Activated T-helper 1 cell treated with anti-CD3 and anti-CD28 coated beads, Interleukin-12 subunit alpha, Interleukin-12 subunit beta, Interleukin-2, Interleukin-4 antibody, amounts not matched to agents 30 ng/mL and 10 ng/mL and 1 ng/mL, durations not matched to agents 14 hours and 24 hours and 36 hours (primary cell): ENCODE measurements at regions of chr10 and their contacts with region 1.

Region 1: GRCh38 chr10:13659897-13660550 is 73.3 kb downstream of the PRPF18 start:
- DNase-seq: peak; percentile 34
- H3K4me3 Mint-ChIP-seq: no peak overlapping the region
- H3K27ac Mint-ChIP-seq: no peak overlapping the region
- H3K4me1 Mint-ChIP-seq: peaks cover 7% of the 10 kb centered on the region
- H3K27me3 Mint-ChIP-seq: peaks cover 2% of the 10 kb centered on the region

Region 2: DNA sequence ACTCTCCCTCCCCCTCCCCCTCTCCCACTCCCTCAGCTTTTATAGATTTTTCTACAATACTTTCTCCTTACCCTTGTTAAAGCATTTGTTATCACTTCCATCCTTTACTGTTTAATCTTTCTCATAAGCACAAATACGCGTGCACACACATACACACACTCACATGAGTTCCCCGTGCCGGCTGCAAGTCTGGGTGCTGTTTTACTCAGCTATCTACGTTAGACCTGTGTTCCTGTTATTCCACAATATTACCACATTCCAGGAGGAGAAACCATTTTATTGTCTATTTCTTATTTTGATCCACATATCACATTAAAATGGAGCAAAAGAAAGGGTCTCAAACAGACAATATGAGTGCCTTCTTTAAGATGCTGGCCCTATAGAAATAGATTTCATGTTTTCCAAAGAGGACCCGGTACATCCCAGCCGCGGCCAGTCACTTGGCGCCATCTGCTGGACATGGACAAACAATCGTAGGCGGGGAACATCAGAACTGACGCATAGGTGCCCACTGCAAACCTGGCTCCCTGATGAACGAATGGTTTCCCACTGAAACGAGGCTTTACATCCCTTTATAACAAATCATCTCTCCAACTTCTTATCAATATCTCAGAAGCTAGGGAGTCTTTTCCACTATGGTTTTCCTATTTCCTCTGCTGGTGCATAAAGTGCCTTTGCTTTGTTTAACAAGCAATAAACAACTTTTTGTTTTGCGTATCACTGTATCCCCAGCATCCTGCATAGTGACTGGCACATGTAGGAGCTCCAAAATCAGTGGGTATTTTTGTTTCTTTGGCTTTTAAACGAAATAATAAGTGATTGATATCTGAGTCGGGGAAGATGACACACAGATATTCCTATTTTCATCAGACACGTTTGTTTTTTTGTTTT is 585.2 kb before region 1 on chr10:
- intact Hi-C with region 1: no loop called
- DNase-seq: peak; percentile 29
- H3K4me3 Mint-ChIP-seq: no peak overlapping the region
- H3K27ac Mint-ChIP-seq: no peak overlapping the region
- H3K4me1 Mint-ChIP-seq: peaks cover 8% of the 10 kb centered on the region
- H3K27me3 Mint-ChIP-seq: peaks cover 24% of the 10 kb centered on the region

Region 3: DNA sequence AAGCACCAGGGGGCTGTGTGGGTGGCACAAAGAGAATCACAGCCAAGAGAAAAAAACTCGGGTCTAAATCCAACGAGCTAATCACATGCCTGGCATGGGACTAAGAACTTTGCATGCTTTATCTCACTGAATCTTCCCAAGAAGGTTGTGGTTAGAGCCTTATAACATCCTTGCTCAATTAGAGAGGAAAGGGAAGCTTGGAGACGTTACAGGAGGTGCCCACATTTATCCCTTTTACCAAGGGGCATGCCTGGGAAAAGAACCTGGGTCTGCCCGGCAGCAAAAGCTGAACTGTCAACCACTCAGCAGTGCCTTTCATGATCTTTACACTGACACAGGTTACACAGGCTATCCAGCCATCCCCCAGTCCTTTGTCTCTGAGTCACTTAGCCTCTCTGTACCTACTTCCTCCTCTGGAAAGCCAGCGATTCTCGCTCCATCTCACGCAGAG is 116.9 kb after region 1 on chr10:
- intact Hi-C with region 1: loop called (anchors 1 kb)
- DNase-seq: no peak
- H3K4me3 Mint-ChIP-seq: no peak overlapping the region
- H3K27ac Mint-ChIP-seq: no peak overlapping the region
- H3K4me1 Mint-ChIP-seq: peaks cover 7% of the 10 kb centered on the region
- H3K27me3 Mint-ChIP-seq: peaks cover 17% of the 10 kb centered on the region